HEK293 (cell line): ENCODE measurements at regions of chr2 and their contacts with region 1.

Region 1: GRCh38 chr2:33395655-33396249 is 80.7 kb upstream of the RASGRP3 start:
- H3K4me3 ChIP-seq: no peak overlapping the region
- H3K27ac ChIP-seq: no peak overlapping the region
- H3K4me1 ChIP-seq: no peaks in the 10 kb centered on the region
- CTCF ChIP-seq: 0 out of 2 replicates have a peak, but pooled peaks have one; percentile 16

Region 2: DNA sequence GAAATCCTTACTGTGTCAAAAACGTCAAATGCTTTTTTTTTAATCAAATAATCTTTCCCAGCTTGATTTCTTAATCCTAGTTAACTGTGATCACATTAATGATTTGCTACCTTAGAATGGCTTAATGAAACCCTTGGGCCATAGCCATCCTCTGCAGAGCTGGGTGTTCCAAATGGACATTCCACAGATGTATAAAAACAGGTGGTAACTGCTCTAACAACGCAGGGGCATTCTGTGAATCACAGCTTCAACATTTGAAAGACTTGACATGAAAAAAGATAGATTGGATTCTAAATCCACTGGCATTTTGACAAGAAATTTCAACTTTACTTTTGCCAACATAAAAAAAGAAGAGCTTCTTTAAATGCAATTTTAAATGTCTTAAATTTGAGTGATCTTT is 10.9 kb after region 1 on chr2:
- CTCF ChIA-PET with region 1: interaction called, 24 read pairs
- POLR2A ChIA-PET with region 1: no interaction called
- H3K4me3 ChIP-seq: no peak overlapping the region
- H3K27ac ChIP-seq: no peak overlapping the region
- H3K4me1 ChIP-seq: no peaks in the 10 kb centered on the region
- CTCF ChIP-seq: no peak

Region 3: GRCh38 chr2:34004936-34005335 is 609.2 kb after region 1 on chr2:
- CTCF ChIA-PET with region 1: no interaction called
- POLR2A ChIA-PET with region 1: no interaction called
- H3K4me3 ChIP-seq: no peak overlapping the region
- H3K27ac ChIP-seq: no peak overlapping the region
- H3K4me1 ChIP-seq: no peaks in the 10 kb centered on the region
- CTCF ChIP-seq: no peak